ENCODE measurements at regions of chr2 and their contacts with region 1.

Region 1: GRCh38 chr2:30711646-30712085 is 95.6 kb downstream of the CAPN13 start:
- DNase-seq: peak; percentile 72
- H3K4me3 ChIP-seq: no peak overlapping the region
- H3K27ac ChIP-seq: no peak overlapping the region
- H3K4me1 ChIP-seq: no peaks in the 10 kb centered on the region
- H3K27me3 ChIP-seq: peaks cover 2% of the 10 kb centered on the region
- CTCF ChIP-seq: peak; percentile 100

Region 2: GRCh38 chr2:30165050-30165520 is 546.6 kb before region 1 on chr2:
- CTCF ChIA-PET with region 1: interaction called, 52 read pairs
- dilution Hi-C with region 1: no loop called
- in situ Hi-C with region 1: loop called in 1 of 2 experiments (anchors 10 kb)
- intact Hi-C with region 1: loop called (anchors 1 kb)
- DNase-seq: peak; percentile 80
- H3K4me3 ChIP-seq: no peak overlapping the region
- H3K27ac ChIP-seq: no peak overlapping the region
- H3K4me1 ChIP-seq: peaks cover 5% of the 10 kb centered on the region
- H3K27me3 ChIP-seq: no peaks in the 10 kb centered on the region
- CTCF ChIP-seq: peak; percentile 80 to 91

Region 3: DNA sequence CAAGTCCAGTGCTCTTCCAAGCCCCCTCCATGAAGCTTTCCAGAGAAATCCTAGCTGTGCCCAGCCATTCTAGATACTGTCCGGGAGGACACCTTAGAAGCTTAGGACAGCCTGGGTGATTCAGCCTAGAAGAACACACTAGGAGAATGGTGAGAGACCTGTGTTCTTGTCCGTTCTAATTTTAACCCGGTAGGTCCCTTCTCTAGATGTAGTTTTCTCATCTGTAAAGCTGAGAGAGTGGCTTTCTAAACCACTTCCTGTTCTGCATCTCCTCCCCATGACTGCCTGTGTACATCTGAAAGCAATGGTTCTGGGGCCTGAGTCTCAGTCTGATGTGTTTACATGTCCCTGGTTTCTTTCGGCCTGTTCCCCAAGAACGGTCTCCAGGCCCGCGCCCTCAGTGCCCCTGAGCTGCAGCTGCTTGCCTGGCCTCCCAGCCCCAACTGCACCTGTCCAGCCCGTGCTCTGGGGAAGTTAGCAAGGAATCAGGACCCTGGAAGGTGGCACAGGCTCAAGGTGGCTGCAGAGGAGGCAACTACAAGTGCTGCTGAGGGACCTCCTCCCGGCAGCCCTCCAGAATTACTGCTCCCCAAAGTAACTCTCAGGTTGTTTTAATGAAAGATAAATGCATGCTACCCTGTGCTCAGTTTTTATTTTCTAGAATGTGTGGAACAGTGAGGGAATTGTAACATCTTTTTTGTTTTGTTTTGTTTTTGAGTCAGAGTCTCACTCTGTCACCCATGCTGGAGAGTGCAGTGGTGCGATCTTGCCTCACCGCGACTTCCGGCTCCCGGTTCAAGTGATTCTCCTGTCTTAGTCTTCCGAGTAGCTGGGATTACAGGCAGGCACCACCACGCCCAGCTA is 374.5 kb before region 1 on chr2:
- CTCF ChIA-PET with region 1: interaction called, 3 read pairs
- dilution Hi-C with region 1: no loop called
- in situ Hi-C with region 1: no loop called
- intact Hi-C with region 1: loop called (anchors 10 kb)
- DNase-seq: no peak
- H3K4me3 ChIP-seq: no peak overlapping the region
- H3K27ac ChIP-seq: no peak overlapping the region
- H3K4me1 ChIP-seq: no peaks in the 10 kb centered on the region
- H3K27me3 ChIP-seq: no peaks in the 10 kb centered on the region
- CTCF ChIP-seq: no peak

Region 4: DNA sequence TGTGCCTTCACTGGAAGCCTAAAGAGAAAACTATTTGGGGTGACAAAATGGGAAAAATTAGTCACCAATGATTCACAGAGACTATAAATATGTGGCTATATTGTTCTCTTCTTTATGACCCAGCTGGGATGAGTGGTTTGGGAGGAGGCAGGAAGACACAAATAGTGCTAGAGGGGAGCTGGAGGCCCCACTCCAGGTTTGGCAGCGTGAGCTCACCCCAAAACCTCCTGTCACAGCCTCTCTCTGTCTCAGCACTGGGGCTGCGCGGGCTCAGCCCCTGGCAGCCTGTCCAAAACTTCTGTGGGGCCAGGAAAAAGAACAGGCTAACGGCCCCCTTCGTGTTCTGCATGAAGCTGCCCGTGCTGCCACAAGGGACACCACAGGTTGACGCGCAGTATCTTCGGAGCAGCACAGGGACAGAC is 337.8 kb before region 1 on chr2:
- CTCF ChIA-PET with region 1: no interaction called
- dilution Hi-C with region 1: no loop called
- in situ Hi-C with region 1: no loop called
- intact Hi-C with region 1: no loop called
- DNase-seq: peak; percentile 56
- H3K4me3 ChIP-seq: no peak overlapping the region
- H3K27ac ChIP-seq: no peak overlapping the region
- H3K4me1 ChIP-seq: peaks cover 3% of the 10 kb centered on the region
- H3K27me3 ChIP-seq: no peaks in the 10 kb centered on the region
- CTCF ChIP-seq: no peak

Region 5: DNA sequence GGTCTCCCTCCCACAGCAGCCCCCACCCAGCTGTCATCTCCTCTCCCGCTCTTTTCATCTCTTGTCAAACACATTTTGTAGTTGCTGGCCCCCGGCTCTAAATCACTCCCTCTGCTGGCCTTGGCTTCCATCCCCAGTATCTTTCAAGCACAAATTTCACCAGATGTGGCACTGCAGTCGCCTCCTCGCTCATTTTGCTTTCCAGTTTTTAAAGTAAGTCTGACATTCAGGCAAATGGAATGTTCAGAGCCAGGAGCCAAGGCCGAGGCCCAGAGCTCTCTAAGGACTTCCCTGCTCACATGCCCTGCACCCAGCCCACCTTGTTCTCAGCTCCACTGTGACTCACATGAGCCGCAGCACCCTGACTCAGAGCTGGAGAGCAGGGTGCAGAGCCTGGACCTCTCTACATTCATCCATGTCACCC is 268.2 kb after region 1 on chr2:
- CTCF ChIA-PET with region 1: no interaction called
- dilution Hi-C with region 1: no loop called
- in situ Hi-C with region 1: no loop called
- intact Hi-C with region 1: loop called (anchors 2 kb)
- DNase-seq: peak; percentile 97
- H3K4me3 ChIP-seq: no peak overlapping the region
- H3K27ac ChIP-seq: peak overlapping the region; percentile 2
- H3K4me1 ChIP-seq: peaks cover 17% of the 10 kb centered on the region
- H3K27me3 ChIP-seq: no peaks in the 10 kb centered on the region
- CTCF ChIP-seq: peak; percentile 50 to 71

Region 6: GRCh38 chr2:31324000-31324633 is 612.5 kb after region 1 on chr2:
- CTCF ChIA-PET with region 1: no interaction called
- dilution Hi-C with region 1: no loop called
- in situ Hi-C with region 1: no loop called
- intact Hi-C with region 1: loop called (anchors 2 kb)
- DNase-seq: peak; percentile 44
- H3K4me3 ChIP-seq: peak overlapping the region; percentile 30 to 60 (median 48)
- H3K27ac ChIP-seq: peak overlapping the region; percentile 58
- H3K4me1 ChIP-seq: peaks cover 11% of the 10 kb centered on the region
- H3K27me3 ChIP-seq: no peaks in the 10 kb centered on the region
- CTCF ChIP-seq: no peak

Region 7: DNA sequence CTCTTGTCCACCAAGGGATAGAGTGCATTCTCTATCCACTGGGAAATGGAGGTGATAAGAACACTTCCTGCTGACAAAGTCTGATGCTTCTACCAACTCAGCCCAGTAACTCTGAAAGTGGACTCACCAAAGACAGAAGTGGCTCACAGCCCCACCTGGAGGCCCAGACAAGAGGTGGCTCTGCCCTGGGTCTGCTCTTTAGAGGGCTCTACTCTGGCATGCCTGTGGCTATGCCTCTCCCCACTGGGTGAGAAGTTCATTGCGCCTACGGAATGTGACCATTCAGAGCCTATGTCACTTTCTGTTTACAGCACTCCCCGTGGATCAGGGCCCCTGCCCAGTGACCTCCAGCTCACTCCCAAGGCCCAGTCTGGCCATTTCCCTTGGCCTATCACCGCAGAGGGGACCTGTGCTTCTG is 716.3 kb after region 1 on chr2:
- CTCF ChIA-PET with region 1: interaction called, 3 read pairs
- dilution Hi-C with region 1: no loop called
- in situ Hi-C with region 1: loop called in 1 of 2 experiments (anchors 25 kb)
- intact Hi-C with region 1: no loop called
- DNase-seq: peak; percentile 56
- H3K4me3 ChIP-seq: no peak overlapping the region
- H3K27ac ChIP-seq: no peak overlapping the region
- H3K4me1 ChIP-seq: peaks cover 35% of the 10 kb centered on the region
- H3K27me3 ChIP-seq: no peaks in the 10 kb centered on the region
- CTCF ChIP-seq: peak; percentile 18 to 42

Region 8: GRCh38 chr2:31729764-31730092 is 1018.1 kb after region 1 on chr2:
- CTCF ChIA-PET with region 1: no interaction called
- dilution Hi-C with region 1: no loop called
- in situ Hi-C with region 1: no loop called
- intact Hi-C with region 1: loop called (anchors 1 kb)
- DNase-seq: peak; percentile 66
- H3K4me3 ChIP-seq: no peak overlapping the region
- H3K27ac ChIP-seq: no peak overlapping the region
- H3K4me1 ChIP-seq: no peaks in the 10 kb centered on the region
- H3K27me3 ChIP-seq: no peaks in the 10 kb centered on the region
- CTCF ChIP-seq: peak; percentile 65 to 81